AG04449 (cell line): ENCODE measurements at regions of chr11 and their contacts with region 1.

Region 1: GRCh38 chr11:118610804-118611795 is 3.7 kb downstream of the PHLDB1 start:
- DNase-seq: no peak
- H3K4me3 ChIP-seq: peak overlapping the region; percentile 80
- CTCF ChIP-seq: peak; percentile 92

Region 2: GRCh38 chr11:118572061-118572980 is 38.8 kb before region 1 on chr11 and contains the start of gene ARCN1:
- CTCF ChIA-PET with region 1: interaction called, 11 read pairs
- POLR2A ChIA-PET with region 1: interaction called, 6 read pairs
- DNase-seq: no peak
- H3K4me3 ChIP-seq: peak within 1 kb of the TSS; percentile 97
- CTCF ChIP-seq: no peak